ENCODE measurements at regions of chr3 and their contacts with region 1.

Region 1: DNA sequence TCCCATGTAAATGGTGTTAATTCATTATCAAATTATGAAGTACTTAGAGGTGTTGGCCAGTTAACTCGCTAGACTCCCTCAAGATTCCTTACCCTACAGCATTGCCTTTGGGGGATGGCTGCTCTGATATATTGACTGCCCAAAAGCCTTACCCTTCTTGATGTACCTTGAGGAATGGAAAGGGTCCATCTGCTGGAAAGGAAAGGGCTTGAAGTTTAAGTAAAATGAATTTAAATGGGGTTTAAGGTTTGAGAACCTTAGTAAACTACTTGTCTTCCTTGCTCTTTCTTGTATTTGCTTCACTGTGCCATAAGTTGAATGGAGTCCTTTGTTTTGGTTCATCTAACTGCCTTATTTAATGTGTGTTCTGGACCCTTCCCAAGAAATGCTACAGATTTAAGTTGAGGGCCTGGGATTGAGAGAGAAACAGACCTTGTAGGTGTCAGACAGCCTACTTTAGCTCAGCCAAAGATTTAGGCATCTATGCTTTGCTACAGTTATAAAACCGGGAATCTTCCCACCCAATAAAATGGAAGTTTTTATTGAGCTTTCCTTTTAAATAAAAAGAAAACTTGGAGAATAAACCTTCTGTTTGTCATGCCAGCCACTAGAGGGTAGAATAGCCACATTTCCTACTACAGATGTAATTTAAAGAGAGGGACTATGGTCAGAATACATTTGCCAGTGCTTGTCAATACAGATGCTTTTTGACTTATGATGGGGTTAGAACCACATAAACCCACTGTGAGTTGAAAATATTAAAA is 25.3 kb downstream of the CMSS1 start:
- DNase-seq: no peak
- ATAC-seq: peak; percentile 75
- H3K4me3 Mint-ChIP-seq: no peak overlapping the region
- H3K27ac Mint-ChIP-seq: no peak overlapping the region
- H3K4me1 Mint-ChIP-seq: peaks cover 11% of the 10 kb centered on the region
- H3K27me3 Mint-ChIP-seq: no peaks in the 10 kb centered on the region

Region 2: GRCh38 chr3:99789011-99789721 is 53.8 kb before region 1 on chr3:
- CTCF ChIA-PET with region 1: no interaction called
- DNase-seq: peak; percentile 41
- ATAC-seq: peak; percentile 55
- H3K4me3 Mint-ChIP-seq: no peak overlapping the region
- H3K27ac Mint-ChIP-seq: no peak overlapping the region
- H3K4me1 Mint-ChIP-seq: no peaks in the 10 kb centered on the region
- H3K27me3 Mint-ChIP-seq: peaks cover 32% of the 10 kb centered on the region

Region 3: DNA sequence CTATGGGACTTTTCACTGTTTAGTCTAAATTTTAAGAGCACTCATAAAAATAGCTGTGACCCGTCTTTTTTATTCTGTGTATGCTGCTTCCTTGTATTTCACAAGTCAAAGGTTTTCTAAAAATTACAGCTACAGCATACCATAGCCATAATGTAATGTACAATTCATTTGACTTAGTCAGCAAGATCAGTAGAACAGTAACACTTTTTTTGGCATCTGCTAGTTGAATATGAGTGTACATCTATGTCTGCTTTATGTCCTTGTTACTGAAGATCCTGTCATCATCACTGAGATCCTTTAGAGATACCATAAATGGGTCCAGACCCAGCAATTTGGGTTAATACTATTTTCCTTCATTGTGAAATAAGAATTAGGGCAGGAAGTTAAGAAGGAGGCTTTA is 16.8 kb after region 1 on chr3:
- CTCF ChIA-PET with region 1: interaction called, 10 read pairs
- DNase-seq: no peak
- ATAC-seq: no peak
- H3K4me3 Mint-ChIP-seq: no peak overlapping the region
- H3K27ac Mint-ChIP-seq: no peak overlapping the region
- H3K4me1 Mint-ChIP-seq: peaks cover 53% of the 10 kb centered on the region
- H3K27me3 Mint-ChIP-seq: no peaks in the 10 kb centered on the region

Region 4: GRCh38 chr3:99901200-99901926 is 58.4 kb after region 1 on chr3:
- CTCF ChIA-PET with region 1: no interaction called
- DNase-seq: no peak
- ATAC-seq: no peak
- H3K4me3 Mint-ChIP-seq: no peak overlapping the region
- H3K27ac Mint-ChIP-seq: no peak overlapping the region
- H3K4me1 Mint-ChIP-seq: peaks cover 5% of the 10 kb centered on the region
- H3K27me3 Mint-ChIP-seq: no peaks in the 10 kb centered on the region

Region 5: GRCh38 chr3:100254168-100254777 is 411.3 kb after region 1 on chr3:
- CTCF ChIA-PET with region 1: interaction called, 28 read pairs
- DNase-seq: peak; percentile 72
- ATAC-seq: peak; percentile 92
- H3K4me3 Mint-ChIP-seq: no peak overlapping the region
- H3K27ac Mint-ChIP-seq: no peak overlapping the region
- H3K4me1 Mint-ChIP-seq: peaks cover 14% of the 10 kb centered on the region
- H3K27me3 Mint-ChIP-seq: no peaks in the 10 kb centered on the region